ENCODE measurements at regions of chr1 and their contacts with region 1.

Region 1: GRCh38 chr1:23959041-23959460 is 577 bp upstream of the PNRC2 start:
- DNase-seq: peak in 4 of 5 donors; percentile 72 to 82 (median 76)
- H3K4me3 ChIP-seq: peak overlapping the region; percentile 84
- H3K27ac ChIP-seq: peak overlapping the region; percentile 93 to 99
- H3K4me1 ChIP-seq: no peaks in the 10 kb centered on the region
- H3K27me3 ChIP-seq: no peaks in the 10 kb centered on the region
- CTCF ChIP-seq: no peak
- EP300 ChIP-seq: no peak
- POLR2A ChIP-seq: peak; percentile 7

Region 2: GRCh38 chr1:23923592-23924499 is 35.2 kb before region 1 on chr1:
- intact Hi-C with region 1: loop called in 1 of 4 experiments (anchors 5 kb)
- DNase-seq: peak in 2 of 5 donors; percentile 26 to 45
- H3K4me3 ChIP-seq: no peak overlapping the region
- H3K27ac ChIP-seq: no peak overlapping the region
- H3K4me1 ChIP-seq: peaks cover 2% of the 10 kb centered on the region
- H3K27me3 ChIP-seq: no peaks in the 10 kb centered on the region
- CTCF ChIP-seq: no peak
- EP300 ChIP-seq: no peak
- POLR2A ChIP-seq: no peak

Region 3: GRCh38 chr1:24018611-24019580 is 59.8 kb after region 1 on chr1:
- intact Hi-C with region 1: loop called in 1 of 4 experiments (anchors 5 kb)
- DNase-seq: peak; percentile 97 to 99 (median 99)
- H3K4me3 ChIP-seq: no peak overlapping the region
- H3K27ac ChIP-seq: peak overlapping the region; percentile 83 to 86
- H3K4me1 ChIP-seq: peaks cover 28% of the 10 kb centered on the region
- H3K27me3 ChIP-seq: no peaks in the 10 kb centered on the region
- CTCF ChIP-seq: peak in 1 of 3 donors; percentile 23
- EP300 ChIP-seq: peak; percentile 76
- POLR2A ChIP-seq: no peak

Region 4: GRCh38 chr1:24027838-24028468 is 68.9 kb after region 1 on chr1:
- intact Hi-C with region 1: loop called in 2 of 4 experiments (anchors 5 kb)
- DNase-seq: no peak
- H3K4me3 ChIP-seq: no peak overlapping the region
- H3K27ac ChIP-seq: no peak overlapping the region
- H3K4me1 ChIP-seq: no peaks in the 10 kb centered on the region
- H3K27me3 ChIP-seq: no peaks in the 10 kb centered on the region
- CTCF ChIP-seq: peak in 2 of 3 donors; percentile 27 to 65
- EP300 ChIP-seq: no peak
- POLR2A ChIP-seq: no peak

Measured in ovary (tissue), 10 donors.